ENCODE measurements at regions of chr14 and their contacts with region 1.

Region 1: DNA sequence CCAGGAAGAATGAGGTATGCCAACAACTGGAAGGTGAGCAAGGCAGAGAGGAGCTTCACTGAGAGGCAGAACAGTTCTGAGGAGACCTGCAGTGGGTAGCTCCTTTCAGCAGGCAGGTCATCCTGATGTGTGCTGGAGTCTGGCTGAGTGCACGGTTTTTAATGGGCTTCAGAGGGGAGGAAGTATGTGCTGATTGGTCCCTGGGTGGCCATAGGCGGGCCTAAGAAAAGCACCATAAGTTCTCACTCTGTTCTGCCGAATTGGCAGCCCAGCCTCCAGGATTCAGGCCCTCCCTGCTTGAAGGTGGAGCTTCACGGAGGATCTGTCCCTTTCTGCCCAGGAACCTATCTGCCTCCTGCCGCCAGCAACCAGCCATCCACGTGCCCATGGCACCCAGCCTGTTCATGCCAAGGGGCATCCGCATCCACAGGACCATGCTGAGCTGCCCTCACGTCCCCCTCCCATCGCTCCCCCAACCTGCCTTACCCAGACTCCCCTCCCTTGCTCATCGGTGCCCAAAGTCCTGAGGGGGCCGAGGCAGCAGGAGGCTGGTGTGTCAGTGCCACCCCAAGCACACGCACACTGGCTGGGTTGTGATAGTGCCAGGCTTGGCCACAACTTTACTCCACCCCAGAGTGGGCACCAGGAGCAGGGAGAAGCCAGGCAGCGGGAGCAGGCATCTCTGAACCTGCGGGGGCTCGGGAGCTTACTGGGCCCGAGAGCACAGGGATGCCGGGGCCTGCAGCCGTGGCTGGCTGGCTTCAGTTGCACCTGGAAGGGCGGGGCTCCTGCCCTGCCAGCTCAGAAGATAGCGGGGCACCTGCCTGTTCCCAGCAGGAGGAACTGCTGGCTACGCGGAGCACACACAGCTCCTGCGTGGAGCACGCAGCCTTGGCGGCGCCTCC is 608.4 kb upstream of the FOXG1 start:
- DNase-seq: no peak
- ATAC-seq: no peak

Region 2: GRCh38 chr14:26427097-26427496 is 1731.0 kb before region 1 on chr14:
- intact Hi-C with region 1: loop called (anchors 5 kb)
- DNase-seq: peak; percentile 55
- ATAC-seq: peak; percentile 82